ENCODE measurements at regions of chr15 and their contacts with region 1.

Region 1: GRCh38 chr15:40274350-40275274 is 8.3 kb downstream of the ANKRD63 start:
- DNase-seq: peak; percentile 90
- H3K4me3 Mint-ChIP-seq: no peak overlapping the region
- H3K27ac Mint-ChIP-seq: no peak overlapping the region
- H3K4me1 Mint-ChIP-seq: peaks cover 5% of the 10 kb centered on the region
- H3K27me3 Mint-ChIP-seq: peaks cover 26% of the 10 kb centered on the region

Region 2: DNA sequence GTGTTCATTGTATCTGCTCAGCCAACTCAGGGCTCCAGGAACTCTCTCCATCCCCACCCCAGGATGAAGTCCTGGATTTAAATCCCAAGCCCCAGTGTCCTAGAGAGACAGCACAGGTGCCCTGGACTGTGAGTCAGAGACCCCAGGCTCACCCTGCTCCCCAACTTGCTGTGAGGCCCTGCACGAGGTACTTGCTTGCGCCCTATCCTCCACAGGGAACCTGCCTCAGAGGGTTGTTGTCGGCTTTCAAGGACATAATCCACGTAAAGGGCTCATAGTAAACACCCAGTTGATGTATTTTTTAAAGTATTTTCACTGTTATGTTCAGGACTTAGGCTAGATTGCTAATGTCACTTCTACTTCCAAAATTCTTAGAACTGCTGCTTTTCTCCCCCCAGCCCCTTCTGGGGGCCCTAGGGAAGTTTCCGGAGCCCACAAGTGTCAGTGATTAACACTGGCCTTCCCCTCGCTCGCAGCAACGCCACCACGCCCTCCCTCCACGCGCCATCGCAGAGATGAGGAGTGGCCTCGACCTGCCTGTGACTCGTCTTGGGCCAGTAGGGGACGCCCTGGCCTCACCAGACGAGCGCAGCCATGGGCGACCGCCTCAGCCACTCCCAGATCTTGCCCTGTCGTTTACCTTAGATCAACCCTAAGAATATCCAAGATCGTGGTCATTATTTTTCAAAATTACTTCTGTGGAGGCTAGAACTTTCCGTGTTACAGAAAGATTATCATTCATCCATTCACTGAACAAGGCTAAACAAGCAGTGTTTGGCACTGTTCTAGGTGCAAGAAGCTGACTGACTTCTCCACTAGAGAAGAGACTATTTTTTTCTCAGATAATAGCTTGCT is 229.7 kb before region 1 on chr15:
- CTCF ChIA-PET with region 1: interaction called, 95 read pairs
- POLR2A ChIA-PET with region 1: interaction called, 4 read pairs
- DNase-seq: peak; percentile 88
- H3K4me3 Mint-ChIP-seq: no peak overlapping the region
- H3K27ac Mint-ChIP-seq: peak overlapping the region; percentile 47
- H3K4me1 Mint-ChIP-seq: peaks cover 77% of the 10 kb centered on the region
- H3K27me3 Mint-ChIP-seq: no peaks in the 10 kb centered on the region

Region 3: DNA sequence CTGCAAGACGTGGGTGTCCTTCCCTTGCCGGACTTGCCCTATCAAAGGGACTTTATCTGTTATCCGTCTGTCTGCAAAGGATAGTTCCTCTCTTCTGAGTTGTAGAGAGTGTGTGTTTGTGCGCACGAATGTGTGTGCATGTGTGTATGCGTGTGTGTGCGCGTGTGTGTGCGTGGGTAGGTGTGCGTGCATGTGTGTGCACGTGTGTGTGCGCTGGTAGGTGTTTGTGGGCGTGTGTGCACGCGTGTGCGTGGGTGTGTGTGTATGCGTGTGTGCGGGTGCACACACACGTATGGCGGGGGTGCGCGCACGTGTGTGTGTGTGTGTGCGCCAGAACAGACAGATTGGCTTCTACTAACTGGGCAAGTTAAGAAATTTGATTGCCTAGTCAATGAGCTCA is 161.8 kb before region 1 on chr15:
- CTCF ChIA-PET with region 1: no interaction called
- POLR2A ChIA-PET with region 1: no interaction called
- DNase-seq: no peak
- H3K4me3 Mint-ChIP-seq: no peak overlapping the region
- H3K27ac Mint-ChIP-seq: peak overlapping the region; percentile 28
- H3K4me1 Mint-ChIP-seq: peaks cover 42% of the 10 kb centered on the region
- H3K27me3 Mint-ChIP-seq: peaks cover 15% of the 10 kb centered on the region

Region 4: GRCh38 chr15:40263024-40263754 is 11.4 kb before region 1 on chr15:
- CTCF ChIA-PET with region 1: interaction called, 30 read pairs
- POLR2A ChIA-PET with region 1: interaction called, 3 read pairs
- DNase-seq: no peak
- H3K4me3 Mint-ChIP-seq: no peak overlapping the region
- H3K27ac Mint-ChIP-seq: no peak overlapping the region
- H3K4me1 Mint-ChIP-seq: no peaks in the 10 kb centered on the region
- H3K27me3 Mint-ChIP-seq: peaks cover 11% of the 10 kb centered on the region

Region 5: GRCh38 chr15:40323239-40323952 is 48.8 kb after region 1 on chr15 and contains the start of gene INAFM2:
- CTCF ChIA-PET with region 1: interaction called, 20 read pairs
- POLR2A ChIA-PET with region 1: interaction called, 3 read pairs
- DNase-seq: peak; percentile 89
- H3K4me3 Mint-ChIP-seq: peak within 1 kb of the TSS; percentile 63
- H3K27ac Mint-ChIP-seq: no peak within 1 kb of the TSS
- H3K4me1 Mint-ChIP-seq: peaks cover 34% of the 10 kb centered on the region
- H3K27me3 Mint-ChIP-seq: peaks cover 11% of the 10 kb centered on the region
- total RNA-seq, gene INAFM2: 8.7 to 8.9 TPM

Region 6: DNA sequence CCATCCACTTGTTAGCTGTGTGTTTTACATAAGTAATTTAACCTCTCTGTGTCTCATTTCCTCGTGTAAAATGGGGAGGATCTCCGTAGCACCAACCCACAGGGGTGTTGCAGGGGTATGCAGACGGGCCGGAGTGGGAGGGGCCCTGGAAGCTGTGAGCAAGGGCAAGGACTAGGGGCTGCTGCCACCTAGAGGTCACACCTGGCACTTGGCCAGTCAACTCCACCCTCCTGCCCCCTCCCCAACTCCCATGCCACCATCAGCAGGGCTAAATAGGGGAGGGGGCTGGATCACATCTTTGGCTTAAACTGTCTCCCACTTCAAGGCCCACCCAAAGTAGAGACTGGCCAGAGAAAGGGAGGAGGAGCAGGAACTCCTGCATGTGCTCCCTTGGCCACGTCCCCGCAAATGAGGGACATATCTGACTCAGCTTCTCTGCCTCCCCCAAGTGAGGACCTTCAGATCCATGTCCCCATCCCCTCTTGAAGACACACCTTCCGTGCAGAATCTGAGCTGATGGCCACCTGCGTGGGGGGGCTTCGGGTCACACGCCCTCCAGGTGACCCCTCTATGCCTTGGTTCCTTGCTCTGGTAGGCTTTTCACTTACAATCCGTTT is 63.5 kb after region 1 on chr15:
- CTCF ChIA-PET with region 1: interaction called, 122 read pairs
- POLR2A ChIA-PET with region 1: interaction called, 4 read pairs
- DNase-seq: peak; percentile 80
- H3K4me3 Mint-ChIP-seq: no peak overlapping the region
- H3K27ac Mint-ChIP-seq: no peak overlapping the region
- H3K4me1 Mint-ChIP-seq: peaks cover 24% of the 10 kb centered on the region
- H3K27me3 Mint-ChIP-seq: no peaks in the 10 kb centered on the region